Cardiac septum (tissue), 1 donor: ENCODE measurements at regions of chr17 and their contacts with region 1.

Region 1: DNA sequence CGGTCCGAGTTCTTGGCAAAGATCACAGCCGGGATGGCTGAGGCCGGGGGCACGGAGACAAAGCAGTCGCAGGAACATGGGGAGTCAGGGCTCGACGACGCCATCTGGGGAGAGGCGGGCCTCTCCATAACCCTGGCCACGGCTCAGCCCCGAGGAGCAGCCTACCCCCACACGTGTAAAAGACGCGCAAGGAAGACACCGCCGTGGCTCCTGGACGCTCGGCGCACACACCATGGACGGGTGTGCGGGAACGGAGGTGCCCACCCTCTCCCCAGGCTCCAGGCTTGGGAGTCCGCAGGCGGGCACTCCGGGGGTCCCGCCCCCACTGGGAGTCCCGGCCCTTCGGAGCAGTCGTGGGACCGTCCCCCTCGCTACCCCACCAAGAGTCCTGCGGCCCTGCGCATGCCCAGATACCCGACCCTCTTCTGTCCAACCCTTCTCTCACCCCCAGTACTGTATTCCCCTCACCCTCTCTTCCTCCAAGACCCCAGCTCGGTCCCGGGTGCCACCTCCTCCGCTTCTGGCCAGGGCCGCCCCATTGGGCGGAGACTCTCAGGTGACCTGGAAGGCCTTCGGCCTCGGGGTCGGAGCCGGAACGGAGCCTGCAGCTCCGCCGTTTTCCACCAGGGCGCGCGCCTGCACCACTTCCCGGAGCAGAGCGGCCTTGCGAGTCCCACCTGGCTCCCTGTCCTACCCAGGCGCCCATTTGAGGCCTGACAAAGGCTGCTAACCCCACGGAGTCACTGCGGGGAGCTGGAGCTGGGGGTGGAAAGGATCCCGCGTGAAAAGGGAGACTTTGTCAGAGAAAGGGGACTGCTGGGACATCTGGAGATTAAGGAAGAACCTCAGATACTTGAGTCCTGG is at the start of gene SCRN2:
- DNase-seq: peak; percentile 97
- total RNA-seq, gene SCRN2: 32.1 TPM

Region 2: DNA sequence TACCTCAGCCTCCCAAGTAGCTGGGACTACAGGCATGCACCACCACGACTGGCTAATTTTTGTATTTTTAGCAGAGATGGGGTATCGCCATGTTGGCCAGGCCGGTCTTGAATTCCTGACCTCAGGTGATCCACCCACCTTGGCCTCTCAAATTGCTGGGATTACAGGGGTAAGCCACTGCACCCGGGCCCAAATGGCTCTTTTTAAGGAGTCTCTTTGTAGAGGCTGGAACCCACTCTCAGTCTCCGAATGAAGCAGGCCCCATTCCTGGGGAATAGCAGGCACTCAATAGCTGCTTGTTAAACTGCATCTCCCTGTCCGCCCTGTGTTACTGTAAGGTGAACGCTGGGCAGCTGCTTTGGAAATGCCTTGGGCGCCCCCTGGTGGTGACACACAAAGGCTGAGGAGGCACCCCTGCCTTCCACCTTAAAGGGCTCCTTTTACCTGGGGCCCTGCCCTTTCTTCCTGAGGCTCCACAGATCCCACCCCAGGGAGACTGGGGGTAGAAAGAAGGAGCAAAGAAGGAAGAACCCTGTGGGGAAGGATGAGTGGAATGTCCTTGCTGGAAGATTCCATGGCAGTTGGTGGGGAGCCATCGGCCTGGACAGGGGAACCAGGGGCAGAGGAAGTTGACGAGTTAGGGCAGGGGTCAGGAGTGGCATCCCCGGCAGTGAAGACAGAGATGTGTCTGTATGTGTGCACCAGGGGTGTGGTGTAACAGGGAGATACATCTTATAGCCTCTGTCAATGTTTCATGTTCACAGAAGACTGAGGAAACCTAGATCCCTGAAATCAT is 49.0 kb after region 1 on chr17:
- intact Hi-C with region 1: loop called (anchors 1 kb)
- DNase-seq: peak; percentile 94

Region 3: GRCh38 chr17:47949136-47949759 is 108.3 kb after region 1 on chr17:
- intact Hi-C with region 1: loop called (anchors 2 kb)
- DNase-seq: peak; percentile 95

Region 4: GRCh38 chr17:47970704-47971463 is 129.9 kb after region 1 on chr17 and contains the start of gene CDK5RAP3:
- intact Hi-C with region 1: loop called (anchors 2 kb)
- DNase-seq: peak; percentile 100
- total RNA-seq, gene CDK5RAP3: 58.2 TPM

Region 5: DNA sequence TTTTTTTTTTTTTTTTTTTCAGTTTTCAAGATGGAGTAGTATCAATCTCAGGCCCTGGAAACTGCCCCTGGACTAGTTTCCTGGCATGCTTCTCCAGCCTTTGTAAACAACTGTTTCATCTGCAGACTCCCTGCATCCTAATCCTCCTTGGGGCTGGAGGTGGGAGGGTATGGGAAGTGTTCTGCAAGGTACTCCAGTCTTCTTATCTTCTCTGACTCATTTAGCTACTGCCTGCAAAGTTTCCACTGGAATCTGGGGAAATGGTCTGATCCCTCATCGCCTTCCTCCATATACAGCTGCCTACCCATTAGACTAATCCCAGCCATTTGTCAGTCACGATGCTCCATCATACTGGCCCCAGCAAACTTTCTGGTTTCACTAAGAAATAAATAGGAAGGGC is 175.1 kb after region 1 on chr17:
- intact Hi-C with region 1: loop called (anchors 5 kb)
- DNase-seq: no peak